HAP-1 (cell line): ENCODE measurements at regions of chr9 and their contacts with region 1.

Region 1: DNA sequence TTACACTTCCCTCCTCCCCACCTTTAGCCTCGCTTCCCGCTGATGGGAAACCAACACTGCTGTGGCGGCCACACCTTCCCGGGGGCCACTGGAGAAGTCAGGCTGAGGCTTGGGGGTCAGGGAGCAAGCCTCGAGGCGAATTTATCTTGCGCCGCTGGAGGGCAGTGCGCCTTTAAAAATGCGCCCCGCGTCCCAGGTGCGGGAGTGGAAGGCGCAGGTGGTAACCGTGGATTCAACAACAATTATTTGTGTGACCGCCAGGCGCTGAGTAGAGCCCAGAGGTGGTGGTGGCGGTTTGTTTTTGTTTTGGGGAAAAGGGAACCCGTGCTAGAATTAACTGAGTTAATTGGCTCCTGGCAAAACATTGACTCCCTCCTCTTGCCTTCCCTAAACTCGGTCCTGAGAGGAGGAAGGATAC is 1.1 kb downstream of the CFAP77 start:
- DNase-seq: peak; percentile 55 to 84
- H3K4me3 ChIP-seq: 0 out of 2 replicates have a peak overlapping the region, but pooled peaks have one; percentile 43
- H3K4me1 ChIP-seq: peaks cover 14% of the 10 kb centered on the region
- H3K27me3 ChIP-seq: peaks cover 28% of the 10 kb centered on the region

Region 2: GRCh38 chr9:132507746-132508469 is 96.8 kb after region 1 on chr9:
- in situ Hi-C with region 1: loop called (anchors 5 kb)
- DNase-seq: peak; percentile 66 to 87
- H3K4me3 ChIP-seq: no peak overlapping the region
- H3K4me1 ChIP-seq: no peaks in the 10 kb centered on the region
- H3K27me3 ChIP-seq: peaks cover 11% of the 10 kb centered on the region; the same call in 1 of the 2 replicates

Region 3: DNA sequence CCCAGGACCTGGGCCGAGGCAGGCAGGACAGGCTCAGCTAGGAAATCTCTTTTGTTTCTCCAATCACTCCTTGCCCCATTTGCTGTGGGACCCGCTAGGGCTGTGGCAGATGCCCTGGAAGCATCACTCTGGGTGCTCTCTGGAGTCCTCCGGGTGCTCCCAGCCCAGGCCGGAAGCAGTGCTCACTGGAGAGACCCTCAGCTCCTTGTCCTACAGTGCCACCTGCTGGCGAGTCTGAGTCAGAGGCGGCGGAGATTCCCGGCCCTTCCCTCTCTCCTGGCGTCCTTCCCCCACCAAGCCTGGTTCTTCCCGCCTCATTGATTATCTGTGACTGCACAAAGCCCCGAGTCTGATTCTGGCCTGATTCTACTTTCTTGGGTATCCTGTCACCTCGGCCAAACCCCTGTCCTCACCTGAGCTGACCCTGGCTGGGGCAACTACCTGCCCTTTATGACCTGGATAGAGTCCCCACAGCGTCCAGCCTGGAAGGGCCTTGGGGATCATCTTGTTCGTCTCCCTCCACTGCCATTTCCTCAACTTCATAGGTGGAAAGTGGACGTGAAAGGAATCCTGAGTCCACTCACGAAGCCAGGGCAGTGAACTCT is 164.0 kb after region 1 on chr9:
- in situ Hi-C with region 1: loop called (anchors 5 kb)
- DNase-seq: peak; percentile 65 to 91
- H3K4me3 ChIP-seq: no peak overlapping the region
- H3K4me1 ChIP-seq: no peaks in the 10 kb centered on the region
- H3K27me3 ChIP-seq: peaks cover 40% of the 10 kb centered on the region

Region 4: DNA sequence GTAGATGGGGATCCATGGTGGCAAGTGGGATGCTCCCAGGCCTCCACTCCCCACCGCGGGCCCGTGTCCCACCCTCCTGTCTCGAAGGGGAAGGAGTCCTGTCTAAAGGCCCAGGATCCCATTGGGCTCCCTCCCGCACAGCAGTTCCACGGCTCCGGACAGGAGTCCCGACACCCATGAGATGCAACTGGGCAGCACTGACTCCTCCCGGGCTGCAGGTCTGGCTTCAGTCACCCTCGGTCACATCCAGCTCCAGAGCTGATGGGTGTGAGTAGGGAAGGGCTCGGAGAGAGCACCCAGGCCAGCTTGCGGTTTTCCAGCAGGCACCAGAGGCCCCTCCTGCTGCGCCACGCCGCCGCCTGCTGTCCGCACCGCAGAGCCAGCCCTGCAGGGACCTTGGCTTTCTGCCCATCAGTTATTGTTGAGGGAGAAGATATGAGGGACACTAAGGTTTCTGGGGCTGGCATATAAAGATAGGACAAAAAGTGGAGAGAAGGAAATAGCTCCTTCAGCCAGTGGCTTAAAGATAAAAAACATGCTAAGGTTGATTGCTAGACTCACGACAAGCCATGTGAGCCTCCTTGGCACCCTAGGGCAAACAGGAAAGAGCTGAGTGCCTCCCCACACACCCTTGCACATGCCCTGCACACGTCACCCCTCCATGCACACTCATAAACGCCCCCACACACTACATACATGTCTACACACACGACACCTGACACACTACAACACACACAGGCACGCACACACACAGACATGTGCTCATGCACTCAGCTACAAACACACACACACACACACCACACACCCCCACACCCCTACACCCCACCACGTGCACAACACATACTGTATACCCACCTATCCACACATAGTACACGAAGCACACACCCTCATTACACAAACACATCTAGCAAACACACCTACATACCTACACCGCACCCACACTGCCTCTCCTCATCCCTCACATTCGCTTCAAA is 388.0 kb after region 1 on chr9:
- in situ Hi-C with region 1: loop called (anchors 10 kb)
- DNase-seq: no peak
- H3K4me3 ChIP-seq: no peak overlapping the region
- H3K4me1 ChIP-seq: no peaks in the 10 kb centered on the region
- H3K27me3 ChIP-seq: no peaks in the 10 kb centered on the region